ENCODE measurements at regions of chr9 and their contacts with region 1.

Region 1: DNA sequence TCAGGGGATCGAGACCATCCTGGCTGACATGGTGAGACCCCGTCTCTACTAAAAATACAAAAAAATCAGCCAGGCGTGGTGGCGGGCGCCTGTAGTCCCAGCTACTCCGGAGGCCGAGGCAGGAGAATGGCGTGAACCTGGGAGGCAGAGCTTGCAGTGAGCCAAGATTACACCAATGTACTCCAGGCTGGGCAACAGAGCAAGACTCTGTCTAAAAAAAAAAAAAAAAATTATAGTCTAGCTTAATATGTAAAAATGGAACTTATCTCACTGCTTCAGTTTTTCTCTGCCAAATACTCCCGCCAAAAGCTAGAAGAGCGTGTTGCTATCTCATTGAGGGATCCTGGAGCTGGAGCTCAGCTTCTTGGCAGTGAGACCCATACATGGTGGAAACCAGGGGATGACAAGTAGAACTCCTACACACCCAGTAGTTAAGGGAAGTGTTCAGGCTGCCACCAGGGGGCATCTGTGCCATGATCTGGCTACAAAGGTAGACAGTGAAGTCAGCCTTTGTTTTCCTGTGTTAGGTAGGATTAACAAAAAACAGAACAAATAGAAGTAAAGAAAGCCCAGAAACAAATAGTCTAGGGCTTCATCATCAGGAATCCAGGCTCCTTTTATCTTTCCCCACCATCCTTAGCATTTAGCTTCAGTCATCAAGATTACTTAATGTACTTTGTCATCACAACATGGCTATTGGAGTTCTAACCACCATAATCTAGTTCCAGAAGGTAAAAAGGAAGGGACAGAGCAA is 33.6 kb upstream of the GLIPR2 start:
- DNase-seq: peak; percentile 88
- H3K4me3 Mint-ChIP-seq: no peak overlapping the region
- H3K27ac Mint-ChIP-seq: no peak overlapping the region
- H3K4me1 Mint-ChIP-seq: peaks cover 8% of the 10 kb centered on the region
- H3K27me3 Mint-ChIP-seq: no peaks in the 10 kb centered on the region

Region 2: DNA sequence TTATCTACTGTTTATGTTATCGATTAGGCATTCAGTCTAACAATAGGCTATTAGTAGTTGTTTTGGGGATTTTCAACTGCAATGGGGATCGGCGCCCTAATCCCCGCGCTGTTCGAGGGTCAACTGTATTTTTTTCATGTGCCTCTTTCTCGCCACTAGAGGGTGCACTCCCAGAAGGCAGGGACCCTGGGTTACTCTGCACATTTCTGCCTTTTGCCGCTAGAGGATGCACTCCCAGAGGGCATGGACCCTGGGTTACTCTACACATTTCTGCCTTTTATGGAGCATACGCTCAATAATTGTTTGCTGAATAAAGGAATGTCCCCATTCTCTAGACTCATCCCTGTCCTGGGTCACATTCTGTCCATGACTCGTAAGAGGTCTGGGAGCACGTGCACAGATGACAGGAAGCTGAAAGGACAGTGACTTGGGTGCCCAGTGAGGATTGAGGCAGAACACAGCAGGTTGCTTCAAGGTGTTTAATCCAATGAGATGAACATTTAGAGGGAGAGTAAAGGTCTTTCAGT is 94.1 kb before region 1 on chr9:
- CTCF ChIA-PET with region 1: interaction called, 10 read pairs
- POLR2A ChIA-PET with region 1: no interaction called
- DNase-seq: peak; percentile 70
- H3K4me3 Mint-ChIP-seq: no peak overlapping the region
- H3K27ac Mint-ChIP-seq: no peak overlapping the region
- H3K4me1 Mint-ChIP-seq: peaks cover 20% of the 10 kb centered on the region
- H3K27me3 Mint-ChIP-seq: peaks cover 46% of the 10 kb centered on the region

Region 3: GRCh38 chr9:36064448-36065037 is 38.4 kb before region 1 on chr9:
- CTCF ChIA-PET with region 1: no interaction called
- POLR2A ChIA-PET with region 1: no interaction called
- DNase-seq: no peak
- H3K4me3 Mint-ChIP-seq: no peak overlapping the region
- H3K27ac Mint-ChIP-seq: no peak overlapping the region
- H3K4me1 Mint-ChIP-seq: peaks cover 5% of the 10 kb centered on the region
- H3K27me3 Mint-ChIP-seq: no peaks in the 10 kb centered on the region

Region 4: DNA sequence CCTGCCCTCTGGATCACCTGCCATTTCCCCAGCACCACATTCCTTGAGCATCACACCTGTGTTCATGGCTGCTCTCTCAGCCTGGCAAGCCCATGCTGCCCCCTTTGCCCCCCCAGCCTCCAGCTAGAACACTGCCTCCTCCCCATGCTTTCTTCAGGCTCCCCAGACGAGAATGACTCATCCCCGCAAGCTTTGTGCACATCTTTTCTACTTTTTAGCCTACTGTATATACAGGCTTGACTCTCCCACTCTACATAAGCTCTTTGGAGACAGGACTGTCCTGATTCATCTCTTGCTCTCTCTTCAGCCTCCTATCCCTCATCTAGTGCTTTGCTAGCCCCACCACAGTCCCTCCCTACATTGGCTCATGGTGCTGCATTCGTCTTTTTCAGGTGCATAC is 13.7 kb after region 1 on chr9:
- CTCF ChIA-PET with region 1: interaction called, 49 read pairs
- POLR2A ChIA-PET with region 1: interaction called, 3 read pairs
- DNase-seq: no peak
- H3K4me3 Mint-ChIP-seq: no peak overlapping the region
- H3K27ac Mint-ChIP-seq: no peak overlapping the region
- H3K4me1 Mint-ChIP-seq: no peaks in the 10 kb centered on the region
- H3K27me3 Mint-ChIP-seq: no peaks in the 10 kb centered on the region

Region 5: GRCh38 chr9:36142510-36143244 is 39.8 kb after region 1 on chr9:
- CTCF ChIA-PET with region 1: interaction called, 4 read pairs
- POLR2A ChIA-PET with region 1: interaction called, 14 read pairs
- DNase-seq: no peak
- H3K4me3 Mint-ChIP-seq: peak overlapping the region; percentile 85
- H3K27ac Mint-ChIP-seq: peak overlapping the region; percentile 96
- H3K4me1 Mint-ChIP-seq: peaks cover 97% of the 10 kb centered on the region
- H3K27me3 Mint-ChIP-seq: peaks cover 3% of the 10 kb centered on the region

Region 6: GRCh38 chr9:36166101-36166927 is 63.4 kb after region 1 on chr9:
- CTCF ChIA-PET with region 1: interaction called, 325 read pairs
- POLR2A ChIA-PET with region 1: interaction called, 19 read pairs
- DNase-seq: peak; percentile 87
- H3K4me3 Mint-ChIP-seq: peak overlapping the region; percentile 66
- H3K27ac Mint-ChIP-seq: no peak overlapping the region
- H3K4me1 Mint-ChIP-seq: peaks cover 12% of the 10 kb centered on the region
- H3K27me3 Mint-ChIP-seq: peaks cover 14% of the 10 kb centered on the region

Region 7: DNA sequence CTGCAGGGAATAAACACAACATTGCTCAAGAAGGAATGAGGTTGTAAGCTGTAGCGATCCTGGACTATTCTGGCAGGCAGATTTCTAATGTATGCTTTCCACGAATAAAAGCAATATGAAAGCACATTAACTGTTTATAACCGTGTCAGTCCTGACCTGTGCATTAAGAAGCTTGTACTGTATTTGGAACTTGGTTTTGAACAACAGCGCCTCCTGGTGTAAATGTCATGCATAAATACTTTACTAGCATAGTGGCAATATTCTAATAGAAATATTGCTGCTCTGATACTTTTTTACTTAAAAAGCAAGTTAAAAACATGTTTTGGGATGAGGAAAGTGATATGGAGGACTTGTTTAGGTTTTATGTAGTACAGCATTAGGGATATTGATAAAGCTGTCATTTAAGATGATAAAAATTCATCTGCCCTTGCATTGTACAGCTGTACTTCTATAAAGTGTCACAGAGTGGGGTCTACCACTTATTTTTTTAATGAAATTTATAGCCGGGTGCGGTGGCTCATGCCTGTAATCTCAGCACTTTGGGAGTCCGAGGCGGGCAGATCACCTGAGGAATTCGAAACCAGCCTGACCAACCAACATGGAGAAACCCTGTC is 226.0 kb after region 1 on chr9:
- CTCF ChIA-PET with region 1: interaction called, 14 read pairs
- POLR2A ChIA-PET with region 1: interaction called, 3 read pairs
- DNase-seq: peak; percentile 38
- H3K4me3 Mint-ChIP-seq: no peak overlapping the region
- H3K27ac Mint-ChIP-seq: no peak overlapping the region
- H3K4me1 Mint-ChIP-seq: peaks cover 6% of the 10 kb centered on the region
- H3K27me3 Mint-ChIP-seq: no peaks in the 10 kb centered on the region

Measured in activated CD4-positive, alpha-beta memory T cell treated with anti-CD3 and anti-CD28 coated beads, Interleukin-2, amount 10 ng/mL, durations not matched to agents 7 days and 5 days (primary cell).